CD8-positive, alpha-beta T cell (primary cell): ENCODE measurements at regions of chr6 and their contacts with region 1.

Region 1: GRCh38 chr6:4115746-4116145 is 19.6 kb downstream of the ECI2 start:
- DNase-seq: no peak
- ATAC-seq: no peak
- H3K4me3 ChIP-seq: no peak overlapping the region
- H3K4me3 Mint-ChIP-seq: no peak overlapping the region
- H3K27ac ChIP-seq: no peak overlapping the region
- H3K27ac Mint-ChIP-seq: no peak overlapping the region
- H3K4me1 ChIP-seq: no peaks in the 10 kb centered on the region
- H3K4me1 Mint-ChIP-seq: no peaks in the 10 kb centered on the region
- H3K27me3 ChIP-seq: no peaks in the 10 kb centered on the region
- H3K27me3 Mint-ChIP-seq: no peaks in the 10 kb centered on the region
- CTCF ChIP-seq: no peak

Region 2: DNA sequence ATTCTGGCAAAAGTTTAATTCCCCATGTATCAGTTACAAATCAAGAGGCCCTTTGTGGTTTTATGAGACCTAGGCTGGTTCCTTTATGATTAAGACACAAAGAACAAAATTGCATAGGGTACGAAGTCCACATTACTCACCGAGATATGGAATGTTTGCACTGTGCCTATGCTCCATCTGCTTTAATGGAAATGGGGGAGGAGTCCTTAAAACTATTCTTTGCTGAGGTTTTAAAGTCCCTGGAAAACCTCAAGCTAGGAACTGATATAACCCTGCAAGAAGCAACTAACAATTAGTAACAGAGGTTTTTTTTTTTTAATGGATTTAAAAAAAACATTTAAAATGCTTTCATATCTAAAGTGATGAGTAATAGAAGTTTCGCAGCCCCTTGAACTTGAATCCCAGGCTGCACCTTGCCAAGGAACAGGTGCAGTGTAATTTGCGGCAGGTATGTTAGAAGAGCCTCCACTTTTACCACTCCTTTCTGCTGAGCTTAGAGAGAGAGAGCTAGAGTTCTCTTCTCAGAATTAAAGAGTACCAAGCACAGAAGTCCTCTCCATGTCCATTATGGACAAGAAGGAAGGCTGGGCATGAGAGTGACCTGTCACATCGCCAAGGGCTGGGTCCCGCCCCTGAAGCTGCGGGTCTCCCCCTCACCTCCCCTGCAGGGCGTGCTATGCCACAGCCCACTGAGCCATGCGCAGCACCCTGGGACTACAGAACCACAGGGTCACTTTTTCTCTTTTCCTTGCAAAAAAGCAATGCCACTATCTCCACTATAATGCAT is 1276.4 kb before region 1 on chr6:
- CTCF ChIA-PET with region 1: no interaction called
- POLR2A ChIA-PET with region 1: no interaction called
- intact Hi-C with region 1: no loop called
- DNase-seq: no peak
- ATAC-seq: no peak
- H3K4me3 ChIP-seq: peak overlapping the region in 1 of 2 experiments; percentile 20
- H3K4me3 Mint-ChIP-seq: peak overlapping the region; percentile 88
- H3K27ac ChIP-seq: peak overlapping the region in 1 of 2 experiments; percentile 12
- H3K27ac Mint-ChIP-seq: peak overlapping the region; percentile 92
- H3K4me1 ChIP-seq: peaks cover 28% of the 10 kb centered on the region
- H3K4me1 Mint-ChIP-seq: peaks cover 65% of the 10 kb centered on the region
- H3K27me3 ChIP-seq: no peaks in the 10 kb centered on the region
- H3K27me3 Mint-ChIP-seq: no peaks in the 10 kb centered on the region
- CTCF ChIP-seq: no peak

Region 3: DNA sequence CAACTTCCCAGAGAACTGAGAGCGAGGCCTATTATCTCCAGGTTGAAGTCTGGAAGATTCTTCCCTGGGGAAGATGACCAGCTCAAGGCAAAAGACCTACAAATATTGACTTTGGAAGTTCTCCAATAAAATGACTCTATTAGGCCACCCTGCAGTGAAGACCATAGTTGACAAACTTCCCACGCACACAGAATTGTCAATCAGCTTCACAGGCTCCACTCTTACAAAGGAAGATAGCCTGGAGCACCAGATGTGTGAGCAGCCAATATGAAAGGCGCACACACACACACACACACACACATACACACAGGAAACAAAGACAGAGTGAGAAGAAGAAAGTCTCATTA is 152.8 kb before region 1 on chr6:
- CTCF ChIA-PET with region 1: no interaction called
- POLR2A ChIA-PET with region 1: no interaction called
- intact Hi-C with region 1: no loop called
- DNase-seq: no peak
- ATAC-seq: no peak
- H3K4me3 ChIP-seq: no peak overlapping the region
- H3K4me3 Mint-ChIP-seq: no peak overlapping the region
- H3K27ac ChIP-seq: no peak overlapping the region
- H3K27ac Mint-ChIP-seq: no peak overlapping the region
- H3K4me1 ChIP-seq: no peaks in the 10 kb centered on the region
- H3K4me1 Mint-ChIP-seq: no peaks in the 10 kb centered on the region
- H3K27me3 ChIP-seq: no peaks in the 10 kb centered on the region
- H3K27me3 Mint-ChIP-seq: peaks cover 2% of the 10 kb centered on the region
- CTCF ChIP-seq: no peak

Region 4: DNA sequence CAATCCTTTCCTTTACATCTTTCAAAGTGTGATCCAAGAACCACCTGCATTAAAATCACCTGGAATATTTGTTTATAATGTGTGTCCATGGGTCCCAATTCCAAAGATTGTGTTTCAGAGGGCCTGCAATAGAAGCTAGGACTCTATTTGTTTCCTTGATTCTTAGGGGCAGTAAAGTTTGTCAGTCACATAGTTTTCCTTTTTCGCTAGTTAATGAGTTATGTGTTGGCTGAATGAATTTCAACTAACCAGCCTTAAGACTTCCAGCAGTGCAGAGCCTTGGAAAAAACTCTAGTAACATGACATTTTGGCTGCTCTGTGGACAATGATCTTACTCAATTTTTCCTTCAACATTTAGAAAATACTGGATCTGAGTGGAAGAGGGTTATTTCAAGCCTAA is 48.1 kb before region 1 on chr6:
- CTCF ChIA-PET with region 1: no interaction called
- POLR2A ChIA-PET with region 1: no interaction called
- intact Hi-C with region 1: loop called in 1 of 2 experiments (anchors 1 kb)
- DNase-seq: no peak
- ATAC-seq: no peak
- H3K4me3 ChIP-seq: no peak overlapping the region
- H3K4me3 Mint-ChIP-seq: no peak overlapping the region
- H3K27ac ChIP-seq: no peak overlapping the region
- H3K27ac Mint-ChIP-seq: peak overlapping the region; percentile 5
- H3K4me1 ChIP-seq: no peaks in the 10 kb centered on the region
- H3K4me1 Mint-ChIP-seq: no peaks in the 10 kb centered on the region
- H3K27me3 ChIP-seq: no peaks in the 10 kb centered on the region
- H3K27me3 Mint-ChIP-seq: no peaks in the 10 kb centered on the region
- CTCF ChIP-seq: no peak

Region 5: DNA sequence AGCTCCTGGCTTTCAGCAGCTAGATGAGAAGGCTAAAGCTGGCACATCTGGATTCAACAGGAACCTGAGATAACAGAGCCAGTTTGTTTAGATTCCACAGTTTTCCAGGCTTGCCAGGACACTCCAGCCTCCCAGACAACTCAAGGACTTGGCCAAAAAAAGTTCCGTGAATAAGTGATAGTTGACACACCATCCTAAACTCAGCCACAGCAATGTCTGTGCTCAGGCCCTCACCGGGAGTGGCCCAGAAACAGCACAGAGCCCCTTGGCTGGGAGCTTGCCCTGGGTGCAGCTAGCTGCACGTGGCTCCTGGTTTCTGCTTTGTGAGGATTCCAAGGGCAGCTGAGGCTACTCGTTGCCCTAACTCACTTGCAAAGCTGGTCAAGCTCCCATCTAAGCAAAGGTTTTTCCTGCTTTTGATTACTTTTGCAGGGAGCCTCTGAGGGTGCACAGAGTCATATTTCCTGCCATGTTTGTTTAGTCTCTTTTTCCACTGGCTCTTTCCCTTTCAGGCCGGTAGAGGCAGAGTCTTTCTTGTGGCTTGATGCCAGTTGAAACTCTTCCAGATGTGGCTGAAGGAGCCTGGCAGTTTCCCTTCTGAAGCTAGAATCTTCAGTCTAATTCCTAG is 138.0 kb after region 1 on chr6:
- CTCF ChIA-PET with region 1: no interaction called
- POLR2A ChIA-PET with region 1: no interaction called
- intact Hi-C with region 1: no loop called
- DNase-seq: no peak
- ATAC-seq: no peak
- H3K4me3 ChIP-seq: no peak overlapping the region
- H3K4me3 Mint-ChIP-seq: no peak overlapping the region
- H3K27ac ChIP-seq: no peak overlapping the region
- H3K27ac Mint-ChIP-seq: no peak overlapping the region
- H3K4me1 ChIP-seq: no peaks in the 10 kb centered on the region
- H3K4me1 Mint-ChIP-seq: no peaks in the 10 kb centered on the region
- H3K27me3 ChIP-seq: no peaks in the 10 kb centered on the region
- H3K27me3 Mint-ChIP-seq: peaks cover 17% of the 10 kb centered on the region
- CTCF ChIP-seq: no peak